Naive thymus-derived CD4-positive, alpha-beta T cell (primary cell): ENCODE measurements at regions of chr16 and their contacts with region 1.

Region 1: GRCh38 chr16:20675488-20676267 is 21.8 kb downstream of the ACSM1 start:
- DNase-seq: peak in 7 of 9 donors; percentile 23 to 48 (median 41)
- ATAC-seq: peak; percentile 73
- H3K4me3 ChIP-seq: peak overlapping the region; percentile 72
- H3K4me3 Mint-ChIP-seq: peak overlapping the region; percentile 76 to 96 (median 91)
- H3K27ac ChIP-seq: peak overlapping the region; percentile 69
- H3K27ac Mint-ChIP-seq: peak overlapping the region; percentile 80 to 97 (median 91)
- H3K4me1 ChIP-seq: peaks cover 15 to 20% of the 10 kb centered on the region in 2 donors
- H3K4me1 Mint-ChIP-seq: peaks cover 20 to 47% (median 38%) of the 10 kb centered on the region in 7 donors
- H3K27me3 ChIP-seq: no peaks in the 10 kb centered on the region
- H3K27me3 Mint-ChIP-seq: no peaks in the 10 kb centered on the region

Region 2: GRCh38 chr16:19168371-19169081 is 1507.2 kb before region 1 on chr16:
- CTCF ChIA-PET with region 1: no interaction called
- POLR2A ChIA-PET with region 1: no interaction called
- intact Hi-C with region 1: no loop called
- DNase-seq: peak in 1 of 9 donors; percentile 23
- ATAC-seq: no peak
- H3K4me3 ChIP-seq: no peak overlapping the region
- H3K4me3 Mint-ChIP-seq: no peak overlapping the region
- H3K27ac ChIP-seq: no peak overlapping the region
- H3K27ac Mint-ChIP-seq: no peak overlapping the region
- H3K4me1 ChIP-seq: no peaks in the 10 kb centered on the region
- H3K4me1 Mint-ChIP-seq: peaks cover 0 to 8% (median 3%) of the 10 kb centered on the region in 7 donors
- H3K27me3 ChIP-seq: no peaks in the 10 kb centered on the region
- H3K27me3 Mint-ChIP-seq: peaks cover 15 to 35% (median 19%) of the 10 kb centered on the region in 5 donors

Region 3: GRCh38 chr16:20763461-20764232 is 88.0 kb after region 1 on chr16 and contains the start of gene ACSM3:
- CTCF ChIA-PET with region 1: no interaction called
- POLR2A ChIA-PET with region 1: no interaction called
- intact Hi-C with region 1: loop called in 1 of 2 experiments (anchors 1 kb)
- DNase-seq: peak in 8 of 9 donors; percentile 51 to 84 (median 79)
- ATAC-seq: peak; percentile 99
- H3K4me3 ChIP-seq: peak within 1 kb of the TSS; percentile 72
- H3K4me3 Mint-ChIP-seq: peak within 1 kb of the TSS; percentile 80 to 97 (median 93)
- H3K27ac ChIP-seq: peak within 1 kb of the TSS; percentile 72
- H3K27ac Mint-ChIP-seq: peak within 1 kb of the TSS; percentile 90 to 96 (median 93)
- H3K4me1 ChIP-seq: peaks cover 4 to 13% of the 10 kb centered on the region in 2 donors
- H3K4me1 Mint-ChIP-seq: peaks cover 7 to 46% (median 31%) of the 10 kb centered on the region in 7 donors
- H3K27me3 ChIP-seq: no peaks in the 10 kb centered on the region
- H3K27me3 Mint-ChIP-seq: no peaks in the 10 kb centered on the region
- total RNA-seq, gene ACSM3: 3.0 to 10.9 (median 7.4) TPM